ENCODE measurements at regions of chr9 and their contacts with region 1.

Region 1: DNA sequence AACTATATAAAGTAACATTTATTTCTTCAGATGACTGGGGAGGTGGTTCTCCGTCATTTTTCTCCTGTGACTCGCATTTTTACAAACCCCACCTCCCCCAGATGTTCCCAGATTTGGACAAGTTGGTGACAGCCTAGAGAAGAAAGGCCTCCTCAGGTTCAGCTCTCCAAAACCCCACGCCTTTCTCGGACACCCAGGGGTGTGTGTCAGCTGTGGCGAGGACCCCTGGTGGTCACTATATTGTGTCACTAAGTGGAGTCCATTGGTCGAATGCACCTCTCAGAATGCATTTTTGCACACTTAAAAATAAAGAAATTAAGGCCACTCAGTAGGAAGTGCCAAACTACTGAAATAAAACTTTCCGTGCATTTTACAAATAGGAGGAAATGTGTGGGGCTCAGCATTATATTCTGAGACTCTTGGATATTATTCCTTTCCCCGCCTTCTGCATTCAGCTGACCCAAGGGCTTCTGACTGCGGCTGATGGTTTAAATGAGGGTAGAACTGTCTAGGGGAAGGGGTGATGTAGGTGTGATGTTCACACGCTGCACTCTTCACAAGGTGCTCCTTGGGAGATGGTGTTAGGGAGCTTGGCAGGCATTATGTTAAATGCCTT is 47.6 kb downstream of the ACO1 start:
- DNase-seq: peak in 4 of 6 donors; percentile 8 to 40 (median 32)
- ATAC-seq: peak in 3 of 4 donors; percentile 33 to 53 (median 44)
- H3K4me3 ChIP-seq: no peak overlapping the region
- H3K27ac ChIP-seq: no peak overlapping the region
- H3K4me1 ChIP-seq: peaks cover 0 to 9% (median 0%) of the 10 kb centered on the region in 3 donors
- H3K27me3 ChIP-seq: no peaks in the 10 kb centered on the region
- CTCF ChIP-seq: peak in 3 of 4 donors; percentile 17 to 31 (median 18)

Region 2: DNA sequence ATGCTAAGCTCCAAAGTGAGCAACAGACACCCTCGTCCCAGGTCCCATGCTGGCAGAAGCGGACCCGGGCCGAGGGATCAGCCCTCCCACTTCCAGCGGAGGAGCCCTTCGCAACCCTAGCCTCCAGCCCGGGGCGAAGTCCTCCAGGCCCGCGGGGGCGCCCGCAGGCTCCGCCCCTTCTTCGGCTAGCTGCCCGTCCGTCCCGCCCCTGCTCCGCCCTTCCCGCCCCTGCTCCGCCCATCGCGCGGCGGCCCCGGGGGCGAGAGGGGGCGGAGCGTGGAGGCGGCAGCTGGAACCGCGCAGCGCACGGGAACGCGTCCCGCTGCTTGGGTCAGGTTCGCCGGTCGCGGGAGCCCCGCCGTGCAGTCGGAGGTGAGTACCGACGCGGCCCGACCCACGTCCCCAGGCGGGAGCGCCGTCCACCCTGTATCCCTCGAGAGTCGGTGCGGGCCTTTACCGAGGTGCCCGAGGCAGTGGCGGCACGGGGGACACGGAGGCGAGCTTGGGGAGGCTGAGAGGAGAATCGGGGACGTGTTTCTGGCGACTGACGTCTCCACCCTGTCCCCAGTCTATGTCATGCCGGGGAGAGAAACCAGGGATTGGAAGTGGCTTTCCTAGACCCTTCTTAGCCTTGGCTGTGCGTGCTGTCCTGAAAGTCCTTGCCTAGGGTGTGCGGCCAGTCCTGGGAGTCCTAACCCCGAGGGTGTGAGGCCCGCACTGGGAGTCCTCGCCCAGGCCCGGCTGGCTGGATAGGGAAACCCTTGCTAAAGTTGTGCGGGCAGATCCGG is 47.5 kb before region 1 on chr9 and contains the start of gene ACO1:
- intact Hi-C with region 1: loop called in 1 of 3 experiments (anchors 5 kb)
- DNase-seq: peak; percentile 89 to 97 (median 94)
- ATAC-seq: peak; percentile 93 to 98 (median 96)
- H3K4me3 ChIP-seq: peak within 1 kb of the TSS; percentile 54 to 89 (median 80)
- H3K27ac ChIP-seq: peak within 1 kb of the TSS; percentile 73 to 87 (median 85)
- H3K4me1 ChIP-seq: peaks cover 25 to 32% (median 29%) of the 10 kb centered on the region in 3 donors
- H3K27me3 ChIP-seq: no peaks in the 10 kb centered on the region
- CTCF ChIP-seq: no peak
- total RNA-seq, gene ACO1: 27.0 to 35.6 (median 31.2) TPM

Region 3: GRCh38 chr9:32502464-32502863 is 70.4 kb after region 1 on chr9:
- intact Hi-C with region 1: loop called in 1 of 3 experiments (anchors 10 kb)
- DNase-seq: no peak
- ATAC-seq: no peak
- H3K4me3 ChIP-seq: no peak overlapping the region
- H3K27ac ChIP-seq: no peak overlapping the region
- H3K4me1 ChIP-seq: peaks cover 0 to under 1% (median 0%) of the 10 kb centered on the region in 3 donors
- H3K27me3 ChIP-seq: no peaks in the 10 kb centered on the region
- CTCF ChIP-seq: no peak

Region 4: GRCh38 chr9:32571969-32572899 is 140.2 kb after region 1 on chr9:
- intact Hi-C with region 1: loop called in 1 of 3 experiments (anchors 10 kb)
- DNase-seq: peak in 5 of 6 donors; percentile 18 to 60 (median 46)
- ATAC-seq: peak; percentile 77 to 95 (median 87)
- H3K4me3 ChIP-seq: peak overlapping the region; percentile 45 to 87 (median 78)
- H3K27ac ChIP-seq: peak overlapping the region; percentile 53 to 87 (median 84)
- H3K4me1 ChIP-seq: peaks cover 0 to 21% (median 11%) of the 10 kb centered on the region in 3 donors
- H3K27me3 ChIP-seq: no peaks in the 10 kb centered on the region
- CTCF ChIP-seq: peak; percentile 23 to 45 (median 34)